AG04449 (cell line): ENCODE measurements at regions of chr10 and their contacts with region 1.

Region 1: GRCh38 chr10:124741281-124741921 is 2.8 kb downstream of the FAM53B start:
- DNase-seq: no peak
- H3K4me3 ChIP-seq: no peak overlapping the region
- CTCF ChIP-seq: peak; percentile 75

Region 2: GRCh38 chr10:124414076-124414475 is 327.3 kb before region 1 on chr10:
- CTCF ChIA-PET with region 1: no interaction called
- POLR2A ChIA-PET with region 1: no interaction called
- DNase-seq: no peak
- H3K4me3 ChIP-seq: no peak overlapping the region
- CTCF ChIP-seq: no peak

Region 3: DNA sequence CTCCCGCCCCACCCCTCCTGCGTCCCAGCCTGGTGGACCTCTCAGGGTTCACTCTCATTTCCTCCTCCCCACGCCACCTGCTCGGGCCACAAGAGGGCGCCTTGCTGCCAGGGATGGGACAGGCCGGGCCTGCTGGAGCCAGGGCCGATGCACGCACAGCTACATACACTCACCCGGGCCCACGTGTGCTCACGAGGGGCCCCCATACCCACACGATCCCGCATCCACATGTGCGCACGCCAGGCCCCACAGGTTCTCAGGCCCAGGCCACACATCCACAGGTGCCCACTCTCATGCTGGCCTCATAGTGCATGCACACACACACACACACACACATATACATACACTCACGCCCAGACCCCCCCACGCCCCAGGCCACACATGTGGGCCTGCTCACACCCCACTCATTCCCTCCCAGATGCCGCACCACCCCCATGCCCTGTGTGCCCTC is 211.2 kb before region 1 on chr10:
- CTCF ChIA-PET with region 1: interaction called, 141 read pairs
- POLR2A ChIA-PET with region 1: no interaction called
- DNase-seq: peak; percentile 17
- H3K4me3 ChIP-seq: no peak overlapping the region
- CTCF ChIP-seq: peak; percentile 98

Region 4: DNA sequence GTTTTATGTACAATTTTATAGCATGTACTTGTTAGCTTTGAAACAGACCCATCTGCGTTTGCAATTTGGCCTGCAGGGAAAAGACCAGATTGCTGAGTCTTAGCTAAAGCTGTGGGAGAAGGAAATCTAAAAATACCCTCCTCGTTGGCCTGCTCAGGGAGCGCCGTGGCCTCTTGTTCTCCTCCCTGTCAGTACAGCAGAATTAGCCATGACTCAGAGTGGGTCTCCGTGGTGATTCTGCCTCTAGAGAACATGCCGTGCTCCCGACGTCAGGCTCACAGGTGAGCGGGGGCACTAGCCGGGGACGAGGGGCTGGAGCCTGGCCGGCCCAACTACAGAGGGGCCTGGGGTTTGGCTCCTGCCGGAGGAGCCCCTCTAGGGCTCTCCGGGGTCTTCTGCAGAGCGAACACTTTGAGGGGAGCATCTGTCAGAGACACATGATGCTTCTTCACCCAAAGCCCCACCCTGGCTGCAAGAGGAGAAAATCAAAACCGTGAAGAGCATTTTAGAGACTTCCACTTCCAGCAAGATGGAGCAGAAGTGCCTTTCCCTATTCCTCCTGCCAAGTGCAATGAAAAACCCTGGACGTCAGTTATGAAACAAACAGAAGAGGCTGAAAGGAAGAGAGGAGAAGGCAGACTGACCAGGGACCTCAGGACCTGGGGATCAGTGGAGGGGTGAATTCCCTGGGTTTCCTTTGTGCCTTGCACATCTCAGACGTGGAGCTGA is 180.9 kb before region 1 on chr10:
- CTCF ChIA-PET with region 1: interaction called, 11 read pairs
- POLR2A ChIA-PET with region 1: no interaction called
- DNase-seq: peak; percentile 49
- H3K4me3 ChIP-seq: no peak overlapping the region
- CTCF ChIP-seq: no peak

Region 5: DNA sequence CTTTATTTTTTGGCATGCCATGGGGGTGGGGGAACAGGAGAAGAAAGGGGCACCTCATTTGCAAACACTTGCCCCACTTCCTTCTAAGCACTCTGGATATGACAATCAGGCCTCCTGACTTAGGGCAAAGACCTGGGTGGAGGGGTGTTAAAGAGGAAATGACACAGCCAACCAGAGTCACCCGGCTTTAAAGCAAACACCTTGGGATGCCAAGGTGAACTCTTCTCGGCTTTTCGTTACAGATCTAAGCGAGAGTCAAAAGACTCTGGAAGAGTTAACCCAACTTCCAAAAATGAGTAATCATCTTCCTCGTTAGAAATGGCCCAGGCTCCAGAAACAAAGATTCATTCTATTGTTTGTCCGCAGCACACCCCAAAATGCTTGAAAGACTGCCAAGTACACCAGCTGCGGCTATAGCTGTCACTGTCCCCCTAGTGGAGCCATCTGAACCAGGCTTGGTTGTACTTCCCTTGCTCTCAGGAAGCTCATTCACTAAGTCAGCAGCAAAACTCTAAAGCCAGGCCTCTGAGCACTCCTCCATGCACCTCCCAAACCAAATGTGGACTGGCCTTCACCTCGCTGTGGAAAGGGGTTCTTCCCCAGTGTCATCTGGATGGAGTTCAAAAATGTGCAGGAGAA is 22.1 kb before region 1 on chr10:
- CTCF ChIA-PET with region 1: interaction called, 56 read pairs
- POLR2A ChIA-PET with region 1: no interaction called
- DNase-seq: no peak
- H3K4me3 ChIP-seq: no peak overlapping the region
- CTCF ChIP-seq: peak; percentile 24

Region 6: GRCh38 chr10:124763267-124763666 is 21.9 kb after region 1 on chr10:
- CTCF ChIA-PET with region 1: interaction called, 18 read pairs
- POLR2A ChIA-PET with region 1: interaction called, 3 read pairs
- DNase-seq: no peak
- H3K4me3 ChIP-seq: no peak overlapping the region
- CTCF ChIP-seq: no peak

Region 7: GRCh38 chr10:124792998-124793352 is 51.6 kb after region 1 on chr10:
- CTCF ChIA-PET with region 1: no interaction called
- POLR2A ChIA-PET with region 1: no interaction called
- DNase-seq: no peak
- H3K4me3 ChIP-seq: no peak overlapping the region
- CTCF ChIP-seq: no peak